ENCODE measurements at regions of chr7 and their contacts with region 1.

Region 1: GRCh38 chr7:94069162-94069739 is 65.1 kb upstream of the BET1 start:
- DNase-seq: no peak
- ATAC-seq: peak; percentile 69
- H3K4me3 ChIP-seq: peak overlapping the region in 1 of 5 experiments; percentile 13
- H3K4me3 Mint-ChIP-seq: peak overlapping the region; percentile 56
- H3K27ac ChIP-seq: no peak overlapping the region
- H3K27ac Mint-ChIP-seq: peak overlapping the region; percentile 41
- H3K4me1 ChIP-seq: peaks cover 22 to 31% of the 10 kb centered on the region in 2 donors
- H3K4me1 Mint-ChIP-seq: peaks cover 36% of the 10 kb centered on the region
- H3K27me3 ChIP-seq: no peaks in the 10 kb centered on the region
- H3K27me3 Mint-ChIP-seq: no peaks in the 10 kb centered on the region
- CTCF ChIP-seq: no peak

Region 2: DNA sequence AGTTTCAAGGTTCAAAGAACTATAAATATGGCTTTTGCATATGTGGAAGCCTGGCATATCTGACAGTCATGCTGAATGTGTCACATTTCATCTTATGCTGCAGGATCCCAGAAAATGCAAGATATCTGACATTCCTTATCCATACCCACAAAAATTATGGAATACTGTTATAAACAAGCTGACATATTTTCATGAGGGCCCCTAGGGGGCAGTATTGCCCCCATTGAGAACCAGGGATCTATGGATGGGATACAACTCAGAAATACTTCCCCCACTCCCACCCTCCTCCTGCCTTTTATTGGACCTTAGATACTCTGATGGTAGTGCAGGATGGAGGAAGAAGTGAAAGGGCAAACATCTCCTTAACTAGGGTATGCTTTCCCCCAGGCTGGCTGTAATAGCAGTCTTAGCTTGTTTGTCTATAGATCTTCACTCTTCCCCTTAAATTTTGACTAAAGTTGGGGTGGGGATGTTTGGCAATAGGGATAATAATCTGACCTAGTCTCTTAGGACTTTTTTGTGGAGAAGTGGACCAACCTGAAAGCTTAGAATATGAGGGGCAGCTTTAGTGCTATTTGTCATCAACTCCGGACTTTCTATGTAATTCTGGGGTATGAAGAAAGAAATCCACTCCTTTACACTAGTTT is 166.4 kb before region 1 on chr7:
- CTCF ChIA-PET with region 1: interaction called, 14 read pairs
- POLR2A ChIA-PET with region 1: no interaction called
- intact Hi-C with region 1: no loop called
- DNase-seq: peak; percentile 66
- ATAC-seq: peak; percentile 41
- H3K4me3 ChIP-seq: no peak overlapping the region
- H3K4me3 Mint-ChIP-seq: no peak overlapping the region
- H3K27ac ChIP-seq: no peak overlapping the region
- H3K27ac Mint-ChIP-seq: no peak overlapping the region
- H3K4me1 ChIP-seq: no peaks in the 10 kb centered on the region
- H3K4me1 Mint-ChIP-seq: no peaks in the 10 kb centered on the region
- H3K27me3 ChIP-seq: no peaks in the 10 kb centered on the region
- H3K27me3 Mint-ChIP-seq: peaks cover 25% of the 10 kb centered on the region
- CTCF ChIP-seq: peak; percentile 80

Region 3: DNA sequence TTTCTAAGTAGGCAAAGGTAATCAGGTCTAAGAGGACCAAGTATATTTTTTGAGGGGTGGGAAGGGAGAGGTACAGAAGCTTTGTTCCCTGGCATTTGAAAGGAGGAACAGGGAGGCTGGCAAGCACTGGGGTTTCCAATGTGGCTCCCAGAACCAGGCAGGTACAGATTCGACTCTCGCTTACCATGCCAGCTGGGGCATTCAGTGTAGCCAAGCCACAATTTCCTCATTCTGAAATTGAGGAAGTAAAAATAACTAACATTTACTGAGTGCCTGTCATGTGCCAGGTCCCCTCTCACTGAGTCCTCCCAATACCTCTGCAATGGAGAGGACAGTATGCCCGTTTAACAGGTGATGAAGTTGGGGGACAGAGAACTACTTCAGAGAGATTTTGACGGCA is 19.2 kb before region 1 on chr7:
- CTCF ChIA-PET with region 1: interaction called, 14 read pairs
- POLR2A ChIA-PET with region 1: interaction called, 6 read pairs
- intact Hi-C with region 1: loop called (anchors 2 kb)
- DNase-seq: peak; percentile 89
- ATAC-seq: peak; percentile 82
- H3K4me3 ChIP-seq: peak overlapping the region in 4 of 5 experiments; percentile 7 to 60 (median 33)
- H3K4me3 Mint-ChIP-seq: peak overlapping the region; percentile 81
- H3K27ac ChIP-seq: peak overlapping the region; percentile 84 to 89
- H3K27ac Mint-ChIP-seq: peak overlapping the region; percentile 91
- H3K4me1 ChIP-seq: peaks cover 67 to 70% of the 10 kb centered on the region in 2 donors
- H3K4me1 Mint-ChIP-seq: peaks cover 67% of the 10 kb centered on the region
- H3K27me3 ChIP-seq: no peaks in the 10 kb centered on the region
- H3K27me3 Mint-ChIP-seq: no peaks in the 10 kb centered on the region
- CTCF ChIP-seq: no peak

Region 4: DNA sequence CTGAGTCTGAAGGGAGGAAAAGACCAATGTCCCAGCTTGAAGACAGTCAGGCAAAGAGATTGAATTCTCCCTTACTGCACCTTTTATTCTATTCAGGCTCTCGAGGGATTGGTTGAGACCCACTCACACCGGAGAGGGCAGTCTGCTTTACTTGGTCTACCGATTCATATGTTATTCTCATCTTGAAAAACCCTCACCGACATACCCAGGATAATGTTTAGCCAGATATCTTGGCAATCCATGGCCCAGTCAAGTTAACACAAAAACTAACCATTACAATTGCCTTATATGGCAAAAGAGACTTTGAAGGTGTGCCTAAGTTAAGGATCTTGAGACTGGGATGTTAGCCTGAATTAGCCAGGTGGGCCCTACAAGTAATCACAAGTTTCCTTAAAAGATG is 11.3 kb before region 1 on chr7:
- CTCF ChIA-PET with region 1: interaction called, 7 read pairs
- POLR2A ChIA-PET with region 1: no interaction called
- intact Hi-C with region 1: loop called (anchors 1 kb)
- DNase-seq: no peak
- ATAC-seq: no peak
- H3K4me3 ChIP-seq: no peak overlapping the region
- H3K4me3 Mint-ChIP-seq: no peak overlapping the region
- H3K27ac ChIP-seq: no peak overlapping the region
- H3K27ac Mint-ChIP-seq: no peak overlapping the region
- H3K4me1 ChIP-seq: peaks cover 20 to 22% of the 10 kb centered on the region in 2 donors
- H3K4me1 Mint-ChIP-seq: peaks cover 32% of the 10 kb centered on the region
- H3K27me3 ChIP-seq: no peaks in the 10 kb centered on the region
- H3K27me3 Mint-ChIP-seq: no peaks in the 10 kb centered on the region
- CTCF ChIP-seq: no peak